Lower leg skin (tissue), 4 donors: ENCODE measurements at regions of chr2 and their contacts with region 1.

Region 1: DNA sequence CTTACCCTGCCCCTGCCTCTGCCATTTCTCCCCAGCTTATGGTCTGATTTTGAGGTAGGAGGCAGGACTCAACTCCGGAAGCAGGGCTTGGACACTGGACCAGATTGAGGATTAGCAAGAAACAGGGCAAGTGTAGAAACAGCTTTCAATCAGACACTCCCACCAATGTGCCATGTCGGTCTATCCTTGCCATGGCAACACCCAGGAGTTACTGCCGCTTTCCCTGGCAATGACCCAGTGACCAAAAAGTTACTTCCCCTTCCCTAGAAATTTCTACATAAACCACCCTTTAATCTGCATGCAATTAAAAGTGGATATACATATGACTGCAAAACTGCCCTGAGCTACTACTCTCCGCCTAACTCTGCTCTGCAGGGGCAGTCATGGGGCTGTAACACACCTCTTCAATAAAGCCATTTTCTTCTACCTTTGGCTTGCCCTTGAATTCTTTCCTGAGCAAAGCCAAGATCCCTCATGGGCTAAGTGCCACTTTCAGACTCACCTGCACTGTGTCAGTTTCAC is 156.7 kb downstream of the LPIN1 start:
- DNase-seq: no peak
- H3K4me3 ChIP-seq: no peak overlapping the region
- CTCF ChIP-seq: no peak
- POLR2A ChIP-seq: no peak

Region 2: DNA sequence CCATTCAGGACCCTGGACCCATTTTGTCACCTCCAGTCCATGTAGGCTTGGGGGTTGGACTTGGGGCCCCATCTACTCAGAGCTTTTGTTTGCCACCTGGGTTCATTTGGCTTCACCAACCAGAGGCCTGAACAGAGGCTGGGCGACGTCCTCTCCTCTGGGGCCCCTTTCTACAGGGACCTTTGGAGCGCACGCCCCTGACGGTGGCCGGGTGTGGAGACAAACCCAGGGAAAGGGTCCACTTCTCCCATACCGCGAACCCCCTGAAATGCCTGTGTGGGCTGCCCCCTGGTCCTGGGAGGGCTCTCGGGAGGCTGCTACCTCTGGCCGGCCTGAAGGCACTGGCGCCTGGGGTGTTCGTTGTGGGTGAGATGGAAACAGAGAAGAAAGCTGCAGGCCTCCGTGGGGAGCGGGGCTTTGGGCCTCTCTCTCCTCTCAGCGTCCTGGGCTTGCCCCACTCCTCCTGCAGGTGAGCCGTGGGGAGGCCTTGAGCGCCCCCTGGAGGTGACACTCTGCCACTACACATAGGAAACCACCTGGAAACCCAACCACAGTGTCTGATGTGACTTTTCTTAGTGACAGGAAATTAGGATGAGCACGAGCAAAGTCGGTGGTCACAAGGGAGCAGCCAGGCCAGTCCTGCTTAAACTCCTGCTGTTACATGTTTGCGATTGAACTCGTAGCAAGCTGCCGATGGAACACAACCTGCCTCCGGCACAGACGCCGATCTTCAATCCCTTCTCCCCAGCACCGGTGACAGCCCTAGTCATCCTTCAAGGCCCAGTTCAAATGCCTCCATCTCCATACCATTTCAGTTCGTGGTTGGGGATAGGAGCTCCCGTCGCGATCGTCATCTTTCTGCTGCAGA is 221.2 kb before region 1 on chr2:
- intact Hi-C with region 1: no loop called
- DNase-seq: peak in 1 of 2 donors; percentile 84
- H3K4me3 ChIP-seq: no peak overlapping the region
- CTCF ChIP-seq: no peak
- POLR2A ChIP-seq: no peak

Region 3: GRCh38 chr2:11784747-11785610 is 118.2 kb before region 1 on chr2:
- intact Hi-C with region 1: no loop called
- DNase-seq: peak in 1 of 2 donors; percentile 87
- H3K4me3 ChIP-seq: no peak overlapping the region
- CTCF ChIP-seq: no peak
- POLR2A ChIP-seq: no peak

Region 4: DNA sequence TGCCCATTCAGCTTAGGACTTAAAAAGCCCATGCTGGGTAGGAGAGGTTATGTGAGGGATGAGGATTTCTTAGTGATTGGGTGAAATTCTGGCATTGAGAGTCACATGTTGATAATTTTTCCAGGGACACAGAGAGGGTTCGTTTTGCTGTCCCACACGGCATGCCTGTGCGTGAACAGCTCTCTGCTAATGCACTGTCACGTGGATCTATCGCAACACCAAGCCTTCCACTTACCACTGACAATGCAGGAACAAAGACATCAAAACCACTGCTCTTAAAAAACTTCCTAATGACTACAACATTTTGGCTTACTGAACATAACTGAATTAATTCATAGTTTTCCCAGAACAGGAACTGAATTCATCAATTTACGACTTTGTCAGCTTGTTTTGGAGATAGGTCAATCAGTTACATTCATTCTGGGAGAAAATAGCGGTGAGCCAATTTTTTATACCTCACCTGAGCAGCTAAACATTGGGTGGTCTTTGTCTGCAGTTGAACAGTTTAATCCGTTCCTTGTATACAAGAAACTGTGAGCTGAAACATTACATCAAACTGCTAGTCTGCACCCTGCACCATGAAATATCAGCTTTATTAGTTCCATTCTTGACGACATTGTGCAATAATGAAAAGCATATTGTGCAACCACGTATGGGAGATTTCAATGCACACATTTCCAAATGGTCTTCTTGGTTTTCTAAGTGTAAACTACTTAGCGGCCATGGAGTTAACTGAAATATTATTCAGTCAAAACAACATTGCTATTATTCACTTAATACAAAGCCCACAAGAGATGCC is 29.6 kb before region 1 on chr2:
- intact Hi-C with region 1: loop called (anchors 2 kb)
- DNase-seq: peak in 1 of 2 donors; percentile 15
- H3K4me3 ChIP-seq: no peak overlapping the region
- CTCF ChIP-seq: no peak
- POLR2A ChIP-seq: no peak